Body of pancreas (tissue), 4 donors: ENCODE measurements at regions of chr7 and their contacts with region 1.

Region 1: GRCh38 chr7:35681231-35682029 is 13.5 kb downstream of the HERPUD2 start:
- DNase-seq: no peak
- ATAC-seq: no peak
- H3K4me3 ChIP-seq: no peak overlapping the region
- H3K27ac ChIP-seq: no peak overlapping the region
- H3K4me1 ChIP-seq: peaks cover 21% of the 10 kb centered on the region
- H3K27me3 ChIP-seq: no peaks in the 10 kb centered on the region
- CTCF ChIP-seq: no peak
- POLR2A ChIP-seq: no peak

Region 2: DNA sequence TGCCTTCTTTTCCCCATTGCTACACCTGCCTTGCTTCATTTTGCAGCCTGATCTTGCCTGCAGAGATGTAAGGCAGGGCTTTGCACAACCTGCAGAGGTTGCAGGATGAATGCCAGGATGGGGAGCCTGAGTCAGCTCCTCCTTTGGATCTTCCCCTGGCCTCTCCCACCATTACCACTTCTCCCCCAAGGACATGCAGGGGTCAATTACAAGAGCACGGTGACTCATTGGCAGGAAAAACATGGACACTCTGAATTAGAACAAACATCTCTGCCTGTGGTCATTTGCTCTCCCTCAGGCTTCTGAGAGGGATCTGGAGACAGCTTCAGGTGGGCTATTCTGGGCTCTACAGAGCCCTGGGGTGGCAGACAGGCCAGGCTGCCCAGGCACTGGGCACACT is 75.7 kb before region 1 on chr7:
- intact Hi-C with region 1: no loop called
- DNase-seq: peak in 1 of 4 donors; percentile 7
- ATAC-seq: no peak
- H3K4me3 ChIP-seq: no peak overlapping the region
- H3K27ac ChIP-seq: no peak overlapping the region
- H3K4me1 ChIP-seq: no peaks in the 10 kb centered on the region
- H3K27me3 ChIP-seq: no peaks in the 10 kb centered on the region
- CTCF ChIP-seq: no peak
- POLR2A ChIP-seq: no peak

Region 3: DNA sequence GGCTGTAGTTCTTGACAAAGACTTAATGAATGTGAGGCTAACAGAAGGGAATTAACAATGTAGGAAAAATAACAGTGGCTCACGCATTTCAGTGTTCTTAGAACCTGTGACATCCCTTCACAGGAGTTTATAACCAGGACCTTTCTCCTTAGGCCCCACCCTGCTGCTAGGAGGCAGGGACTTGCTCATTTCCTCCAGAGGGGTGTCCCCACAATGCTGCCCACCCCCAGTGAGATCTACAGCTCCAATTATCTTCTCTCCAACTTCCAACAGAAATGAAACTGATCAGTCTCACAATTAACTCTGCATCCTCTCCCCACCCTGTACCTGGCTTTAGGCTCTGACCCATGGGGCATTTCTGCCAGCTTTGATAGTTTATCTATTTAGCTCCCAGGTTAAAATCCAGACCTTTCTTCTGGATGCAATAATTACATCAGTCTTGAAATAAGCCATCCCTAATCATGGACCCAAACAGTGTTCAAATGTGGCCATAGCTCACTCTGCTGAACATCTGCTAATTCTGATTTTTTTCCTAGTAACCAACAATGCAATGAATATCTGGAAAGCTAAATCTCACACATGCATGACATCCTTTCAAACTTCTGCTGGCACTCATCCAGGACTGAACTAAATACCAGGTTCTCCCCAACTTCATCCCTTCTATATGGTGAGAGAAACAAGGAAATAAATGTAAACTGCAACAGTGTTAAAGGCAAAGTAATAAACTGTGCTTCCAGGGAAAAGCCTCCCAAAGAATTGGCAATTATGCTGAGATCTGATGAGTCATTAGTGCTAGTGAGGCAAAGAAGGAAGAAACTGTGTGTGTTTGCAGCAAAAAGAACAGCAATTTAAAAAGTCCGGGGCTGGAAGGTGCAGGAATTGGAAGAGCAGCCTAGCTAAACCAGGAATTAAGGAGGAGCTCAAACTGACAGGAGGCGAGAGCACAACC is 51.1 kb before region 1 on chr7:
- intact Hi-C with region 1: loop called (anchors 10 kb)
- DNase-seq: no peak
- ATAC-seq: no peak
- H3K4me3 ChIP-seq: no peak overlapping the region
- H3K27ac ChIP-seq: no peak overlapping the region
- H3K4me1 ChIP-seq: no peaks in the 10 kb centered on the region
- H3K27me3 ChIP-seq: no peaks in the 10 kb centered on the region
- CTCF ChIP-seq: no peak
- POLR2A ChIP-seq: no peak

Region 4: GRCh38 chr7:35645691-35646090 is 35.7 kb before region 1 on chr7:
- intact Hi-C with region 1: no loop called
- DNase-seq: no peak
- ATAC-seq: no peak
- H3K4me3 ChIP-seq: no peak overlapping the region
- H3K27ac ChIP-seq: peak overlapping the region in 3 of 4 donors; percentile 83 to 92 (median 87)
- H3K4me1 ChIP-seq: peaks cover 76% of the 10 kb centered on the region
- H3K27me3 ChIP-seq: no peaks in the 10 kb centered on the region
- CTCF ChIP-seq: no peak
- POLR2A ChIP-seq: no peak

Region 5: GRCh38 chr7:35738889-35739288 is 57.5 kb after region 1 on chr7:
- intact Hi-C with region 1: no loop called
- DNase-seq: no peak
- ATAC-seq: no peak
- H3K4me3 ChIP-seq: no peak overlapping the region
- H3K27ac ChIP-seq: no peak overlapping the region
- H3K4me1 ChIP-seq: no peaks in the 10 kb centered on the region
- H3K27me3 ChIP-seq: no peaks in the 10 kb centered on the region
- CTCF ChIP-seq: no peak
- POLR2A ChIP-seq: no peak

Region 6: GRCh38 chr7:36264123-36264801 is 582.8 kb after region 1 on chr7:
- intact Hi-C with region 1: no loop called
- DNase-seq: peak in 1 of 4 donors; percentile 35
- ATAC-seq: peak; percentile 35
- H3K4me3 ChIP-seq: no peak overlapping the region
- H3K27ac ChIP-seq: peak overlapping the region in 1 of 4 donors; percentile 14
- H3K4me1 ChIP-seq: peaks cover 20% of the 10 kb centered on the region
- H3K27me3 ChIP-seq: no peaks in the 10 kb centered on the region
- CTCF ChIP-seq: no peak
- POLR2A ChIP-seq: no peak